Panc1 (cell line): ENCODE measurements at regions of chr4 and their contacts with region 1.

Region 1: GRCh38 chr4:141599853-141600252 is 36.5 kb upstream of the IL15 start:
- DNase-seq: no peak
- ATAC-seq: no peak
- H3K4me3 ChIP-seq: no peak overlapping the region
- H3K27ac ChIP-seq: no peak overlapping the region
- H3K4me1 ChIP-seq: no peaks in the 10 kb centered on the region
- H3K27me3 ChIP-seq: no peaks in the 10 kb centered on the region
- CTCF ChIP-seq: no peak

Region 2: DNA sequence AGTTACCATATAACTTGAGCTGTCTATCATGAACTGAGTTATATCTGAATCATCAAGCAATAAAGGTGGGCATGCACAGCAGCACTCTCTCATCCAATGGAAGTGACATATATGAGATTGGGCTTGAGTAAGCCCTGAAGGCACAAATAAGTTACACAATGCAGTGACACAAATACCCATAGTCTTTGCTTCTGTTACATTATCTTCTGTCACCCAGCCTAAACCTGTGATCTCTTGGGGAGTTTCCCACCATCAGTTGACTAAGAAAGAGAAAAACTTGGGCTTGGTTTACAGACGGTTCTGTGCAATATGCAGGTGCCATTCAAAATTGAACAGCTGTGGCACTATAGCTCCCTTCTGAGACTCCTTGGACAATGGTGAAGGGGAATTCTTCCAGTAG is 102.2 kb before region 1 on chr4:
- CTCF ChIA-PET with region 1: no interaction called
- POLR2A ChIA-PET with region 1: no interaction called
- in situ Hi-C with region 1: no loop called
- intact Hi-C with region 1: no loop called
- DNase-seq: no peak
- ATAC-seq: no peak
- H3K4me3 ChIP-seq: no peak overlapping the region
- H3K27ac ChIP-seq: no peak overlapping the region
- H3K4me1 ChIP-seq: no peaks in the 10 kb centered on the region
- H3K27me3 ChIP-seq: no peaks in the 10 kb centered on the region
- CTCF ChIP-seq: no peak

Region 3: GRCh38 chr4:143025081-143025704 is 1425.3 kb after region 1 on chr4:
- CTCF ChIA-PET with region 1: no interaction called
- POLR2A ChIA-PET with region 1: interaction called, 10 read pairs
- in situ Hi-C with region 1: no loop called
- intact Hi-C with region 1: no loop called
- DNase-seq: no peak
- ATAC-seq: no peak
- H3K4me3 ChIP-seq: no peak overlapping the region
- H3K27ac ChIP-seq: no peak overlapping the region
- H3K4me1 ChIP-seq: no peaks in the 10 kb centered on the region
- H3K27me3 ChIP-seq: no peaks in the 10 kb centered on the region
- CTCF ChIP-seq: peak; percentile 22